ENCODE measurements at regions of chr20 and their contacts with region 1.

Region 1: DNA sequence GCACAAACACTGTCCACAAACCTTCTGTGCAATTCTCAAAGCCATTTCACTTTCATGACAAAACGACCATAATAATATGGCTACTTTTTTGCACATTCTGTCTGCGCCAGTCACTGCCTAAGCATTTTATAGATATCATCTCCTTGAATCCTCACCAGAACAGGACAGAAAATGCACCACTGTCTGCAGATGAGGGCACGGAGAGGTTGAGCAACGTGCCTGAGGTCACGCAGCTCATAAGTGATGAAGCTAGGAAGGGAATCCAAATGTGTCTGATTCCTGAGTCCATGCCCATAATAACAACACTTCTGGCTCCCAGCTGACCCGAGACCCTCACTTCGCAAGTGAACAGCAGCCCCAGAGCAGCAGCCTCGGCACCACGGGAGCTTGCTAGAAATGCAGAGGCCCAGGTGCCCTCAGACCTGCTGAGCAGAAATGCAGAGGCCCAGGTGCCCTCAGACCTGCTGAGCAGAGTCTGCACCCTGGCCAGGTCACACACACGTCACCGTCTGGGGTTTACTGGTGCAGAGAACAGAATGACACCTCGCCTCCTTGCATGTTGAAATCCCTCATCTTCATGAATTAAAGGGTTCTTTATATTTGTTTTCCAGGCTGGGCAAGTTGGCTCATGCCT is 265.2 kb downstream of the BMP7 start:
- DNase-seq: no peak
- H3K27ac ChIP-seq: no peak overlapping the region
- CTCF ChIP-seq: no peak

Region 2: DNA sequence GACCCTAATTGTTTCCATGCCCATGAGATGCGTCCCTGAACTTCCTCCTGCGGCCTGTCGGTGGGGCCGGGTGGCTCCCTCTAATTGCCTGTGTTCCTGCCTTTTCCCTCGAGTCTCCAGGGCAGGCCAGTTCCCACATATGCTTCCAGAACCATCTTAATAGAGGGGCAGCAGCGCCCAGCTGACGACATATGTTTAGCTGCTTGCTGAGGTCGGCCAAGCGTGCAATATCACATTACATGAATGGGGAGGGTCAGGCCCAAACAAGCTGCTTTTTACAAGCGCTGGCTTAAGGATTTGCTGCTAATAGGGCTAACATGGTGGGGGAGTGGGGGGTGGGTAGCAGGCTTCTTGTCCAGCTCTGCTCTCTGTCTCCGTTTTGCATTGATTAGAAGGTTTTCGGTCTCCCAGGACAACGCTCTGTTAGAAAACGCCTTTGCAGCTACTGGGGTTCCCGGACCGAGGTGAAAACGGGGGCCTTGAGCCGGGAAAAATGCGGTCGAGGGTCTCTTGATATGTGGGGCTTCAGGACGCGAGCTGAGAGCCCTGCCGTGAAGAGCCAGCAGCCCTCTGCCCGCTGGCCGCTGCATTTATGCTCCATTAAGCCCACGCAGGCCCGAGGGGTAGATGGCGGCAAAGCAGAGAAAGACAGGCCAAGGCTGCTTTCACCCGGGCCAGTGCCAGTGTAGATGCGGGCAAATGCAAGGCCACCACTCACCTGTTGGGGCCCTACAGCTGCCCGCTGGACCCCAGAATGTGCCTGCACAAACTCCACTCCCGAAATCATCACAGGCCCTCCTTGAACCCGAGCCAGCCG is 43.3 kb before region 1 on chr20:
- CTCF ChIA-PET with region 1: no interaction called
- POLR2A ChIA-PET with region 1: no interaction called
- DNase-seq: no peak
- H3K27ac ChIP-seq: no peak overlapping the region
- CTCF ChIP-seq: no peak

Region 3: DNA sequence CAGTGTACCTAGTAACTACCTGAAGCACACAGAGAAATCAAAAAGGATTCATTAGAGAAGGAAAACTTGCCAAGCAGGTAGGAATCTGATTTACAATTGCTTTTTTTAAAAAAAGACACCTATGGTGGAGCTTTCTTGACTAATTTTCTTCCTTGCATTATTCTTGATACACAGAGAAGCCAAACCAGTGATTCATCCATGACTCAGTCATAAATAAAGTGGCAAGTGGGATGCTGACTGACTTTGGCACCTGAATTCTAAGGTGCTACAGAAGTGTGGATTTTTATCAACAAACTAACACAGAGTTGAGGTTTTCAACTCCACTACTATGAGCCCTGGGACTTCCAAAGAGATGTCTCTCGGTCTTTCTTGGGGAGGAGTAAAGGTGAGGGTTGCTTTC is 16.0 kb before region 1 on chr20:
- CTCF ChIA-PET with region 1: interaction called, 12 read pairs
- POLR2A ChIA-PET with region 1: no interaction called
- DNase-seq: peak; percentile 86
- H3K27ac ChIP-seq: no peak overlapping the region
- CTCF ChIP-seq: no peak